ENCODE measurements at regions of chr2 and their contacts with region 1.

Region 1: DNA sequence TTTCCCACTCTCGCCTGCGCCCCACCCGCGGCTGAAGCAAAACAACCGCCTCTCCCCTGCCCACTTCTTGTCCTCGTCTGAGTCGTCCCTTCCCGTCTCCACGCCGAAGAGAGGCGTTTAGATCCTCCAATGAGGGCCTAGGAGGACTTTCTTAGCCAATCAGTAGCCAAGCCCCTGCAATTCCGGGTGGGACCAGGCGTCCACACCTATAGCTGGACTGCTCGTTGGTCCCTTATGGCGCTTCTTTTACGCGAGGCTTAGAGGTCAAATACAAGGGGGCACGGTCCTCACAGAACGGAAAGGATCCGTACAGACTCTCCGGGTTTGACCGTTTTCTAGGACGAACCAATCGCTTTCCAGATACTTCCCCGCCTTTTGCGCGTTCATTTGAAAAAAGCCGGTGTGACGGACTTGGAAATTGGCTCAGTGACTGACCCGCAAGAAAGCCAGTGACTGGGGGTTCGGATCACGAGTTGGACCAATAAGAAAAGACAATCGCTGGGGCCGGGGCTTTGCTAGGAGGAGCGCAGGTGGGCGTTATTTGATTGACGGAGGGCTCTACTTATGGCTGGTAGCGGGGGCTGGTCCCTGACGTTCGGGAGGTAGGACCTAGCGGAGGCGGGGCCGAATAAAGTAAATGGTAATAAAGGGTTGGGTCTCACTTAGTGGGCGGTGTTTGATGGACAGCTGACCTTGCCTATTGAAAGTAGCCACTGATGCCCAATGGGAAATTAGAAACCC is 565 bp upstream of the PPM1B start:
- DNase-seq: peak; percentile 98
- ATAC-seq: peak; percentile 83
- H3K4me3 ChIP-seq: peak overlapping the region; percentile 59
- H3K27ac ChIP-seq: peak overlapping the region; percentile 92
- H3K4me1 ChIP-seq: no peaks in the 10 kb centered on the region
- H3K27me3 ChIP-seq: no peaks in the 10 kb centered on the region
- CTCF ChIP-seq: no peak
- EP300 ChIP-seq: no peak
- POLR2A ChIP-seq: peak; percentile 80
- RAD21 ChIP-seq: no peak

Region 2: GRCh38 chr2:44184106-44184505 is 16.0 kb after region 1 on chr2:
- CTCF ChIA-PET with region 1: interaction called, 9 read pairs
- POLR2A ChIA-PET with region 1: interaction called, 10 read pairs
- RAD21 ChIA-PET with region 1: interaction called, 15 read pairs
- SMC1A ChIA-PET with region 1: interaction called, 29 read pairs
- in situ Hi-C with region 1: no loop called
- intact Hi-C with region 1: no loop called
- DNase-seq: no peak
- ATAC-seq: peak; percentile 71
- H3K4me3 ChIP-seq: no peak overlapping the region
- H3K27ac ChIP-seq: no peak overlapping the region
- H3K4me1 ChIP-seq: peaks cover 8% of the 10 kb centered on the region; the same call in 1 of the 2 replicates
- H3K27me3 ChIP-seq: no peaks in the 10 kb centered on the region
- CTCF ChIP-seq: no peak
- EP300 ChIP-seq: no peak
- POLR2A ChIP-seq: no peak
- RAD21 ChIP-seq: no peak

Region 3: GRCh38 chr2:44191739-44192138 is 23.6 kb after region 1 on chr2:
- CTCF ChIA-PET with region 1: interaction called, 5 read pairs
- POLR2A ChIA-PET with region 1: interaction called, 9 read pairs
- RAD21 ChIA-PET with region 1: interaction called, 18 read pairs
- SMC1A ChIA-PET with region 1: interaction called, 27 read pairs
- in situ Hi-C with region 1: no loop called
- intact Hi-C with region 1: loop called (anchors 2 kb)
- DNase-seq: peak; percentile 42
- ATAC-seq: peak; percentile 94
- H3K4me3 ChIP-seq: peak overlapping the region; percentile 37; the same call in 1 of the 2 replicates
- H3K27ac ChIP-seq: peak overlapping the region; percentile 80
- H3K4me1 ChIP-seq: peaks cover 43% of the 10 kb centered on the region
- H3K27me3 ChIP-seq: no peaks in the 10 kb centered on the region
- CTCF ChIP-seq: no peak
- EP300 ChIP-seq: peak; percentile 40 to 53; a peak in 1 of 4 replicates
- POLR2A ChIP-seq: no peak
- RAD21 ChIP-seq: no peak

Region 4: GRCh38 chr2:44201648-44202165 is 33.6 kb after region 1 on chr2:
- CTCF ChIA-PET with region 1: no interaction called
- POLR2A ChIA-PET with region 1: interaction called, 6 read pairs
- RAD21 ChIA-PET with region 1: interaction called, 5 read pairs
- SMC1A ChIA-PET with region 1: interaction called, 10 read pairs
- in situ Hi-C with region 1: no loop called
- intact Hi-C with region 1: no loop called
- DNase-seq: no peak
- ATAC-seq: no peak
- H3K4me3 ChIP-seq: no peak overlapping the region
- H3K27ac ChIP-seq: no peak overlapping the region
- H3K4me1 ChIP-seq: no peaks in the 10 kb centered on the region
- H3K27me3 ChIP-seq: no peaks in the 10 kb centered on the region
- CTCF ChIP-seq: no peak
- EP300 ChIP-seq: no peak
- POLR2A ChIP-seq: no peak
- RAD21 ChIP-seq: no peak

Region 5: DNA sequence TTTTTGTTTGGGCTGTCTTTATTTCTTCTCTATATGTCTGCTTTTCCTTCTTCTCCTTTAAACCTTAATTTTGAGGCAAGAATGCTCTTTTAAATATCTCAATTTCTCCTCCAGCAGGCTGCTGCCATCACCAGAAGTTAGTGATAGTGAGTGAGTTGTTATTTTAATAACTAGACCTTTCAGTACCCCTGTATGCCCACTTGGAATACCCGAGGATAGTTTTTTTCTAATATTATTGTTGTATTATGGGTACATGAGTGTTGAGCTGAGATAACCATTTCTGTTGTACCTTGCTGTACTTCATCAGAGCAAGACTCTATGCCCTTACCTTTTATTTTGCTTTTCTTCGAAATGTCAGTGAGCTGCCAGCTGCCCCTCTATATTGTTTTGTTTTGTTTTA is 50.7 kb after region 1 on chr2:
- CTCF ChIA-PET with region 1: no interaction called
- POLR2A ChIA-PET with region 1: no interaction called
- RAD21 ChIA-PET with region 1: interaction called, 8 read pairs
- SMC1A ChIA-PET with region 1: interaction called, 10 read pairs
- in situ Hi-C with region 1: no loop called
- intact Hi-C with region 1: no loop called
- DNase-seq: no peak
- ATAC-seq: no peak
- H3K4me3 ChIP-seq: no peak overlapping the region
- H3K27ac ChIP-seq: no peak overlapping the region
- H3K4me1 ChIP-seq: no peaks in the 10 kb centered on the region
- H3K27me3 ChIP-seq: no peaks in the 10 kb centered on the region
- CTCF ChIP-seq: no peak
- EP300 ChIP-seq: no peak
- POLR2A ChIP-seq: no peak
- RAD21 ChIP-seq: no peak

Region 6: DNA sequence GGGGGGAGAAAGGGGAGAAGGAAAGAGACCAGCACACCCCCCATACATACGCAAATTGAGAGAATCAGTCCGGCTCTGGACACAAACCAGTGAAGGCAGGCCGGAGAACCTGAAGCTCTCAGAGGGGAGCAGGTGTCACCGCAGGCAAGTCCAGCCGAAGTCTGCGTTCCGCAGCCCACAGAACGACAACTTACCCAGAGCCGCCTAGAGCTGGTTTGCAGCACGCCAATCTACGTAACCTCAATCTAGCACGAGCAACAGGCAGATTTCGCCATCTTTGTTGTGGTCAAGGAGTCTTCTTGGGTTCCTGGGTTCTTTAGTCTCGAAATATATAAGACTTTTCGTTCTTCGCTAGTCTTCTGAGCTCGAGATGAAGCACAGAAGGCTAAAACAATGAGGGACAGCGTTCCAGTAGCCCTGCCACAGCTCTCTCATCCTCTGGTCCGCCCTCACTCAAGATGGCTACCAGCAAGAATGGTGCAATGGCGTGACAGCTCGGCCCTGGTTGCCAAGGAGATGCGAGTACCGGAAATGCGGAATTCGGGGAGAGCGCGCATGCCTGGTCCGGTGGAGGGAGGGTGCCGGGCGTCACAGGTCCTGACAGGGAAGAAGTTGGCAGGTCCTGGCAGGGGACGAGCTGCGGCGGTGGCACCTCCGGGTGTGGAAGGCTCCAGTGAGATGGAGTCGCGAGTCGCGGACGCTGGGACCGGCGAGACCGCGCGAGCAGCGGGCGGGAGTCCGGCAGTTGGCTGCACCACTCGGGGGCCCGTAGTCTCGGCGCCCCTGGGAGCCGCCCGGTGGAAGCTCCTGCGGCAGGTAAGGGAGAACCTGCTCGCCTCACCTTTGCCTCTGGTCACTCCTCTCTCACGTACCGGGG is 193.5 kb after region 1 on chr2 and contains the starts of genes CAMKMT and PREPL:
- CTCF ChIA-PET with region 1: no interaction called
- POLR2A ChIA-PET with region 1: interaction called, 14 read pairs
- RAD21 ChIA-PET with region 1: interaction called, 5 read pairs
- SMC1A ChIA-PET with region 1: no interaction called
- in situ Hi-C with region 1: no loop called
- intact Hi-C with region 1: no loop called
- DNase-seq: peak; percentile 90
- ATAC-seq: peak; percentile 86
- H3K4me3 ChIP-seq: peak within 1 kb of the TSS; percentile 83
- H3K27ac ChIP-seq: peak within 1 kb of the TSS; percentile 100
- H3K4me1 ChIP-seq: peaks cover 10% of the 10 kb centered on the region
- H3K27me3 ChIP-seq: no peaks in the 10 kb centered on the region
- CTCF ChIP-seq: no peak
- EP300 ChIP-seq: peak in 1 of 2 experiments; percentile 39; a peak in 1 of 4 replicates
- POLR2A ChIP-seq: peak; percentile 99
- RAD21 ChIP-seq: no peak
- polyA plus RNA-seq, gene CAMKMT: 2.7 to 3.7 TPM
- polyA plus RNA-seq, gene PREPL: 9.2 to 9.6 TPM

Region 7: DNA sequence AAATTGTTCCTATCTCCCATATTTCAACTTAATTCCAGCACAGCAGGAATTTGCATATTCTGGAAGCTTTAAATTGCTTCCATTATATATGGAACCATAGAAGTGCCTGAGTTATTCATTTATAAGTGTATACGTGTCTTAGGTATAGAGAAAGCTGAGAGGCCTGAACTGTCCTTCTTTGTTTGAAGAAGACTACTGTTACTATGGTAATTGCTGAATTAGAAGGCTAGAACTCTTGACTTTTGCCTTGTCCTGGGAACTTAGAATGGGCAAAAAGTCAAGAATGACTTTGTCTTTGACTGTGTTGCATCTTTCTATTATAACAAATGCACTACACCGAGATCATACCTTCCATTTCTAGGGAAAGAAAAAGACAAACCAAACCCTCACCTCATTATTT is 209.4 kb after region 1 on chr2:
- CTCF ChIA-PET with region 1: no interaction called
- POLR2A ChIA-PET with region 1: no interaction called
- RAD21 ChIA-PET with region 1: no interaction called
- SMC1A ChIA-PET with region 1: no interaction called
- in situ Hi-C with region 1: no loop called
- intact Hi-C with region 1: no loop called
- DNase-seq: no peak
- ATAC-seq: no peak
- H3K4me3 ChIP-seq: no peak overlapping the region
- H3K27ac ChIP-seq: no peak overlapping the region
- H3K4me1 ChIP-seq: no peaks in the 10 kb centered on the region
- H3K27me3 ChIP-seq: no peaks in the 10 kb centered on the region
- CTCF ChIP-seq: no peak
- EP300 ChIP-seq: no peak
- POLR2A ChIP-seq: no peak
- RAD21 ChIP-seq: no peak

Region 8: DNA sequence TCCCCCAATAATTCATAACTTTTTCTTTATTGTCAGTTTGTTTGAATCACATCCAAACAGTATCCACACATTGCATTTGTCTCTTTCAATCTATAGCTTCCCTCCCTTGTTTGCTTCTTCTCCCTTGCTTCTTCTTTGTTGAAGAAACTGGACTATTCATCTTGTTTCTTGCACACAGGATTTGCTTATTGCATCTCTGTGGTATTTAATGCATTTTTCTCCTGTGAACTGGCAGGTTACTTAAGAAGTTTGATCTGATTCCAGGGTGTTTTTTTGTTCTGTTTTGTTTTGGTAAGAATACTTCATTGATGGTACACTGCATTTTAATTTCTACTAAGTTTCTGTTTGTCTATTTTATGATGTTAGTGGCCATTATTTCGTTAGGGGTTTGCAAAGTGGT is 360.5 kb after region 1 on chr2:
- CTCF ChIA-PET with region 1: no interaction called
- POLR2A ChIA-PET with region 1: no interaction called
- RAD21 ChIA-PET with region 1: no interaction called
- SMC1A ChIA-PET with region 1: no interaction called
- in situ Hi-C with region 1: no loop called
- intact Hi-C with region 1: no loop called
- DNase-seq: no peak
- ATAC-seq: no peak
- H3K4me3 ChIP-seq: no peak overlapping the region
- H3K27ac ChIP-seq: no peak overlapping the region
- H3K4me1 ChIP-seq: no peaks in the 10 kb centered on the region
- H3K27me3 ChIP-seq: no peaks in the 10 kb centered on the region
- CTCF ChIP-seq: no peak
- EP300 ChIP-seq: no peak
- POLR2A ChIP-seq: no peak
- RAD21 ChIP-seq: no peak